Calu3 (cell line): ENCODE measurements at regions of chr9 and their contacts with region 1.

Region 1: DNA sequence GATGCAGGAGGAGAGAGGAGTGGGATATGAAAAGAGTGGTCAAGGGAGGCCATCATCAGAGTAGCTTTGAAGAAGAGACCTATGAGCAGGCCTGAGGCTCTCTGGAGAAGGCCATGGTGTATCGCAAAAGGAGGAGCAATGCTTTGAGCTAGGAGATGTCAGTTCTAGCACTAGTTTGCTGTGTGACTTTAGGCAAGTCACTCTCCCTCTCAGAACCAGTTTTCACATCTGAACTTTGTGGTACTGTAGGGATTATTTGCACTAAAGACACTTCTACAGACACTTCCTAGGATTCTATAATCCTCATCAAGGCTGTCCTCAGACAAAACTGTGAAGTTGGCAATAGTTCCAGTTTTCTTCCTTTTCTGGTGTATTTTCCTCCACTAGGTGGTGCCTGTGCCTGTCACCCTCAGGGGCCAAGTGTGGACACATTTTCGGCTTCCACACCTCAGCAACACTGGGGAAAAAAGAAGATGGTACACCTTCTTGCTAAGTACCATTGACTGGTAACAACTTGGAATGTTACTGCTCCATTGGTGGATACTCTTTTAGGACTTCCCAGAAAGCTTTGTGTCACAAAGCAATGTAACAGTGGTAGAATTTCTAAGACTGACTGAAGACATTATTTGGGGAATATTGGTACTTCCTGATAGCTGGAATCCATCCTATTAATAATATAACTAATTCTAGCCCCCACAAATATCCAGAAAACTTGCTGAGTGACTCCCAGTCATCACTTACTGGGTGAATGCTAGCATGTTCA is 9.9 kb downstream of the PAPPA start:
- DNase-seq: no peak
- H3K4me3 Mint-ChIP-seq: no peak overlapping the region
- H3K27ac Mint-ChIP-seq: no peak overlapping the region
- H3K4me1 Mint-ChIP-seq: no peaks in the 10 kb centered on the region
- H3K27me3 Mint-ChIP-seq: peaks cover 34% of the 10 kb centered on the region
- CTCF ChIP-seq: no peak

Region 2: DNA sequence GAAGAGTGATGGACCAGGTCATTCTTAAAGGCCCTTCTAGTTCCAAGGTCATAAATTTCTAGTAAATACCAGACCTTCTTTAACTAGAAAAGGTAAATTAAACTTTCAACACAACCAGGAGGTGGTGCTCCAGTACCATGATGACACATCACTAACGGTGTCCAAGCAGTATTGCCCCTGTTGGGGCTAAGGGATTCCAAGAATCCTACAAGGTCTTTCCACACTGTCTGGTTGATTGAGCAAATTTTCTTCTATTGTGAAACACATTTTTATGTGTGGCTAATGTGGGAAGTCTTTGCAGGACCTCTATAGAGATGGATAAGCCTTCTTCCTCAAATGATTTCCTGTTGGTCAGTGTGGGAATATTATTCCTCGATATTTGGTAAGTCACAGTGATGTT is 469.5 kb before region 1 on chr9:
- CTCF ChIA-PET with region 1: no interaction called
- intact Hi-C with region 1: loop called (anchors 10 kb)
- DNase-seq: peak; percentile 16
- H3K4me3 Mint-ChIP-seq: no peak overlapping the region
- H3K27ac Mint-ChIP-seq: peak overlapping the region; percentile 23
- H3K4me1 Mint-ChIP-seq: peaks cover 11% of the 10 kb centered on the region
- H3K27me3 Mint-ChIP-seq: no peaks in the 10 kb centered on the region
- CTCF ChIP-seq: no peak

Region 3: GRCh38 chr9:116414374-116414773 is 250.9 kb after region 1 on chr9:
- CTCF ChIA-PET with region 1: no interaction called
- intact Hi-C with region 1: no loop called
- DNase-seq: no peak
- H3K4me3 Mint-ChIP-seq: no peak overlapping the region
- H3K27ac Mint-ChIP-seq: no peak overlapping the region
- H3K4me1 Mint-ChIP-seq: no peaks in the 10 kb centered on the region
- H3K27me3 Mint-ChIP-seq: no peaks in the 10 kb centered on the region
- CTCF ChIP-seq: no peak